ENCODE measurements at regions of chr11 and their contacts with region 1.

Region 1: DNA sequence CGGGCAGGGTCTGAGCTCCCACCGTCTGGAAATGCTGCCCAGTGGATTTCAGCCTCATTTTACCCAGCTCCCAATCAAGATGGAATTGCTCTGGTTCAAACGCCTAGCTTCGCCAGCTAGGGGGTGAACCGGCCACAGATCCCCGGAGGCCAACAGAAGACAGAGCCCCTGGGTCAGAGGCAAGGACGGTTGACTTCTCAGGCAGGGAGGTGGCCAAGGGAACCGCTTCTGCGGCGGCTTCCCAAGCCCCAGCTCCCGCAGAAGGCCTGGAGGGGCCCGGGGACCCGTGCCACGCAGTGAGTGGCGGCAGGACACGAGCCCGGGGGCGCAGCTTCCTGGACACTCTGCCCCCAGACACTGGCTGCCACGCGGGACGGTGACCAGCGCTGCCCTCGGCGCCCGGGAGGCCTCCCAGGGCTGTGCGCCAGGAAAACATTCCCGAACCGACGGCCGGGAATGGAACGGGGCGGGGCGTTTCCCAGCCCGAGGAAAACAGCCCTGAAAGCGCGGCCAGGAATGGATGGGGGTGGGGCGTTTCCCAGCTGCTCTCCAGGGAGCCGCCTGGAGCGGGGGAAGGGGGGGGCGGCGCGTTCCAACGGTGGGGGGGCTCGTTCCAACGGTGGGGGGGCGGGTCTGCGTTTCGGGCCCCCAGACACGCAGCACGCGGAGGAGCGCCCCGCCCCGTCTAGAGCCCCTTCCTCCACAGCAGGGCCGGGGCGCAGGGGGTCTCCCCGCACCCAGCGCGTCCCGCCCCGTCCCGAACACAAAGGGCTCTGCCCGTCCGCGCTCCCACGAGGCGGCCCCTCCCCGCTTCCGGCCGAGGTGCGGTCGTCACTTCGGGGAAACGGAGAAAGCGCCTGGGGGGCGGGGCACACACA is 13.5 kb upstream of the B4GALNT4 start:
- DNase-seq: peak; percentile 85
- H3K4me3 Mint-ChIP-seq: peak overlapping the region; percentile 86
- H3K27ac Mint-ChIP-seq: peak overlapping the region; percentile 93
- H3K4me1 Mint-ChIP-seq: peaks cover 26% of the 10 kb centered on the region
- H3K27me3 Mint-ChIP-seq: peaks cover 4% of the 10 kb centered on the region

Region 2: GRCh38 chr11:207208-207862 is 148.5 kb before region 1 on chr11 and contains the starts of genes BET1L and RIC8A:
- intact Hi-C with region 1: loop called (anchors 1 kb)
- DNase-seq: peak; percentile 97
- H3K4me3 Mint-ChIP-seq: peak within 1 kb of the TSS; percentile 89
- H3K27ac Mint-ChIP-seq: peak within 1 kb of the TSS; percentile 98
- H3K4me1 Mint-ChIP-seq: peaks cover 55% of the 10 kb centered on the region
- H3K27me3 Mint-ChIP-seq: no peaks in the 10 kb centered on the region
- total RNA-seq, gene BET1L: 42.0 and 48.7 TPM in 2 replicates
- total RNA-seq, gene RIC8A: 132 and 149 TPM in 2 replicates

Region 3: DNA sequence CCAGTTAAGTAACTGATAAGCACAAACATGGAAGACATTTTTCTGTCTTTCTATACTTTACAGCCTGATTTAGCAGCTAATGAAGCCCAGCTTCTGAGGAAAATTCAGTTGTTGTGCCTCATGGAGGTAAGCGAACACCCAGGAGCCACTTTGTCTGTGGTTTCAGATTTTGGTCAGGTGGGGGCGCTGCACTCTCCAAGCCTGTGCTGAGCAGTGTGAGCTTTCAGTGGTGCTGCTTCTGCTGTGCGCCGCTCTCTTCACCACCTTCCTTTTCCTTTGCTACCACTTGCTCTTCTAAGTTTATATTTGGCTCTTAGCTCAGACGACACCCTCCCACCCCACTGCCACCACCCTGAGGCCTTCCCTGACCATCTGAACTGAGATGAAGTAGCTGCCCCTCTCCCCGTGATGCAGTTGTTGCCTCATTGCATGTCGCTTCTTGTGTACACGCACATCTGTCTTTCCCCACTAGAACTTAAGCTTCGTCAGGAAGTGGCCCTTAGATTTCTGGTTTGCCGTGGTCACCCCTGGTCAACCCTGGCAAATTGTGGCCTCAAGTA is 105.0 kb before region 1 on chr11:
- intact Hi-C with region 1: loop called (anchors 2 kb)
- DNase-seq: peak; percentile 65
- H3K4me3 Mint-ChIP-seq: no peak overlapping the region
- H3K27ac Mint-ChIP-seq: peak overlapping the region; percentile 1
- H3K4me1 Mint-ChIP-seq: peaks cover 26% of the 10 kb centered on the region
- H3K27me3 Mint-ChIP-seq: no peaks in the 10 kb centered on the region

Region 4: DNA sequence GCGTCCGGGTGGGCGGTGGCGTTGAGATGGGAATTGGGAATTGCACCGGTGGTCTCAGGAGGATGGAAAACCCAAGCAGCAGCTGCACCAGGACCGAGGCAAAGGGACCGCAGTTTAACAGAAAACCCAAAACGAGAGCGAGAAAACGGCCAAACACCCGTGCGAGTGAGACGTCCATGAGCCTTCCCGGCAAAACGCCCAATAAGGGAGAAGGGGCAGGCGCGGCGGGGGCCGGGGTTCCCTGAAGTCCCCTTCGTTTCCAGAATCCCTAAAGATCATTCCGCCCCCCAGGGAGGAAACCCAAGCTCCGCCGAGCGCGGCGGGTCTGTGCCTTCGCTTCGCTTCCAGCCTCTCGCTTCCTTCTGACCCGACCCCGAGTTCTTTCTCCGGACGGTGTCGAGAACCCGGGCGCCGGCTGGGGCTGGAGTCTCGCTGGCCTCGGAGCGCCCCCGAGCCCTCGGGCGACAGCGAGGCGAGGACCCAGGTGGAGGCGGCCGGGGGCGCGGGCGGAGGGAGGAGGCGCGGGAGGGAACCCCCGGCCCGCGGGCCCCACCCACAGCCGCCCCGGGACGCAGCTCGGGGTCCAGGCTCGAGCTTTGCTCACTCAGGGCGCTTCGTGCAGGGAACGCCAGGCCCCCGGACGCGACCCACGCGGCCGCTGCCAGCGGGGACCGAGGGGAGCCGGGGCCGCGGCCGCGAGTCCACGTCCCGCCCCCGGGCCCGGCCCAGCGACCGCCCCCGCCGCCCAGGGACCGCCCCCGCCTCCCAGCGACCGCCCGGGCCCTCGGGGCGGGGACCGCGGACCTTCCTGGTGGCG is 67.3 kb before region 1 on chr11 and contains the start of gene PGGHG:
- intact Hi-C with region 1: loop called (anchors 5 kb)
- DNase-seq: peak; percentile 68
- H3K4me3 Mint-ChIP-seq: peak within 1 kb of the TSS; percentile 95
- H3K27ac Mint-ChIP-seq: peak within 1 kb of the TSS; percentile 98
- H3K4me1 Mint-ChIP-seq: peaks cover 37% of the 10 kb centered on the region
- H3K27me3 Mint-ChIP-seq: peaks cover 6% of the 10 kb centered on the region
- total RNA-seq, gene PGGHG: 164 and 167 TPM in 2 replicates

Region 5: GRCh38 chr11:313787-314547 is 41.9 kb before region 1 on chr11 and contains the start of gene IFITM1:
- intact Hi-C with region 1: loop called (anchors 2 kb)
- DNase-seq: peak; percentile 64
- H3K4me3 Mint-ChIP-seq: peak within 1 kb of the TSS; percentile 93
- H3K27ac Mint-ChIP-seq: peak within 1 kb of the TSS; percentile 96
- H3K4me1 Mint-ChIP-seq: peaks cover 44% of the 10 kb centered on the region
- H3K27me3 Mint-ChIP-seq: no peaks in the 10 kb centered on the region
- total RNA-seq, gene IFITM1: 208 and 214 TPM in 2 replicates

Region 6: DNA sequence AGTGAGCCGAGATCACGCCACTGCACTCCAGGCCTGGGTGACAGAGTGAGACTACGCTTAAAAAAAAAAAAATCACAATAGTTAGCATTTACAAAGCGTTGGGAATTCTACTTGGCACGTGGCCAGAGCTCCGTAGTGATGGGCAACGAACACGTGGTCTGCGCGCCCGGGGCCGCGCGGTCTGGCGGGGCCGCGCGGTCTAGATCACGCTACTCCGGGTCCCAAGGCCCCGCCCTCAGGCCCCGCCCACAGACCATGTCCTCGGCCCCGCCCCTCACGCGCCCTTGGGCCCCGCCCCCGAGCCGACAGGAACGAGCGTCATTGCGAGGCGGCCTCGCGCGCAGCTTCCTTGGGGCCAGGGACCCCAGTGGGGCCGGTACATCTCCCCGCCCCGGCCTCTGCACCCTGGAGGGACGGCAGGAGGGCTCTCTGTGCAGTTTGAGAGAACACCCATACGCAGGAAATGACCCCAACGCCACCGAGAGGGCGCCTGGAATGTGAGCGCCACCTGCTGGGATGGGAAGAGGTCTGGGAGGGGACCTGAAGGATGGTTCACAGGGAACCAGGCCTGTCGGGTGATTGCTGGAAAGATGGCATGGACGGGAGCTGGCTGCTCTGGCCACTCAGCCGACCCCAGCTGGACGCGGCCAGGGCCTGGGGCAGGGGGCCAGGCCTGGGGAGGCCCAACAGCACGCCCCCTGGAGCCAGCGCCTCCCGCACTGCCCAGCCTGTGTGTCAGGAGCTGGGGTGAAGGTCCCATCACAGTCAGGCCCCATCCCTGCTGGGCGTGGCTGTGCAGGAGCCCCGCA is 92.3 kb after region 1 on chr11:
- intact Hi-C with region 1: loop called (anchors 5 kb)
- DNase-seq: peak; percentile 92
- H3K4me3 Mint-ChIP-seq: peak overlapping the region; percentile 88
- H3K27ac Mint-ChIP-seq: peak overlapping the region; percentile 91
- H3K4me1 Mint-ChIP-seq: peaks cover 16% of the 10 kb centered on the region
- H3K27me3 Mint-ChIP-seq: no peaks in the 10 kb centered on the region

Measured in activated T-helper 1 cell treated with anti-CD3 and anti-CD28 coated beads, Interleukin-12 subunit alpha, Interleukin-12 subunit beta, Interleukin-2, Interleukin-4 antibody, amounts not matched to agents 30 ng/mL and 10 ng/mL and 1 ng/mL, durations not matched to agents 14 hours and 24 hours and 36 hours (primary cell).